Psoas muscle (tissue), 8 donors: ENCODE measurements at regions of chr12 and their contacts with region 1.

Region 1: DNA sequence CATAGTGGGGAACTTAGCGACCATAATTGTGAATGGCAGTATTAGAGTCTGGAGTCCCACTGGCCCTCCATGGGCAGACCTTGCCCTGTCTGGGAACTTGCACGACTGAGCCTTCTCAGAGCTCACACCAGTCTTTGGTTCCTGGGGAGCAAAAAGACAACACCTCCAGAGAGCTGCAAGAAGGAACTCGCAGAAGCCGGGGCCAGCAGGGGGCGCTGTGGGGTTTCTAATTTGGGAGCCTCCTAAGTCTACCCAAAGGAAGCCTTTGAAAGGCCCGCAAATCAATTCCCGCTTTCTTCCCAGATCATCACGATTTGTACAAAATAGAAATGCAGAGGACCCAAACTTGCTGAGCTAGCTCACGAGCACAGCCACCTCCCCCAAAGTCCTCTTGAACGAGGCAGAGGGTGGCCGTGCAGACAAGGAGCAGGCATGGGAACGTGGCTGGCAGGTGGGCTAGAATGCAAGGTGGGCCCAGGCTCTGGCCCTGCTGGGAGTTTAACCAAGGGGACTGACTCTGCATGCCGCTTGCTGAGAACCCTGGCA is 46.3 kb upstream of the FBXO21 start:
- DNase-seq: peak; percentile 76 to 88
- ATAC-seq: peak; percentile 52 to 78 (median 62)
- H3K4me3 ChIP-seq: no peak overlapping the region
- H3K27ac ChIP-seq: no peak overlapping the region
- H3K4me1 ChIP-seq: no peaks in the 10 kb centered on the region
- H3K27me3 ChIP-seq: no peaks in the 10 kb centered on the region
- CTCF ChIP-seq: peak; percentile 79

Region 2: DNA sequence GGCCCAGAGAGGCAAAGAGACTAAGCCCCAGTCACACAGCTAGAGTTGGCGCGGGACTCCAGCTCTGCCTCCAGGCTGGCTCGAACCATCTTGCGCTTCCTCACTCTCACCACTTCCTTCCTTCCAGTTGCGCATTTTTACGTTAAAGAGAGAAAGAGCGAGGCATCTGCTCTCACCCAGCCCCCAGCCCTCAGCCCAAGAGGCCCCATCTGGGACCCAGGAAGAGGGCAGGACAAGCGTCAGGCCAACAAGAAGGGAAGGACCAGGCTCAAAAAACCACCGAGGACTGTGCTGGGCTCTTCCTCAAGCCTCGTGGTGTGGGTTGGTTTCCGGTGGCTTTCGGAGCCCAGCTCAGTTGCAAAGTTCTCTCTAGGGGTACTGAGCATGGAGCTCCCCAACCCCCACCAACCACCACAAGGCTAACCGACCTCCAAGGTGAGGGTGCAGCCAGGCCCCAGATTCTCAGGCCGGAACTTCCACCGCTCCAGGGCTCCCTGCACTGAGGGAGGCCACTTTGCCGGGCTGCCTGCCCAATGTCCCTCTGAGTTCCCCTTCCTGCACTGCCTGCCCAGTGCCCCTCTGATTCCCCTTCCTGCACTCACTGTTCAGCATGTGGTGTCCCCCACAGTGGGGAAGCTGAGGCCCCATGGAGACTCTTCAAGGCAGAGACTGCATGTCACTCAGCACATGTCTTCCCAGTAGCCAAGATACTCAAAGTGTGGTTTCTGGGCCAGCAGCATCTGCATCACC is 173.2 kb before region 1 on chr12:
- intact Hi-C with region 1: no loop called
- DNase-seq: no peak
- ATAC-seq: peak in 3 of 4 donors; percentile 16 to 30 (median 29)
- H3K4me3 ChIP-seq: no peak overlapping the region
- H3K27ac ChIP-seq: no peak overlapping the region
- H3K4me1 ChIP-seq: no peaks in the 10 kb centered on the region
- H3K27me3 ChIP-seq: peaks cover 0 to 6% (median 3%) of the 10 kb centered on the region in 3 donors
- CTCF ChIP-seq: no peak

Region 3: DNA sequence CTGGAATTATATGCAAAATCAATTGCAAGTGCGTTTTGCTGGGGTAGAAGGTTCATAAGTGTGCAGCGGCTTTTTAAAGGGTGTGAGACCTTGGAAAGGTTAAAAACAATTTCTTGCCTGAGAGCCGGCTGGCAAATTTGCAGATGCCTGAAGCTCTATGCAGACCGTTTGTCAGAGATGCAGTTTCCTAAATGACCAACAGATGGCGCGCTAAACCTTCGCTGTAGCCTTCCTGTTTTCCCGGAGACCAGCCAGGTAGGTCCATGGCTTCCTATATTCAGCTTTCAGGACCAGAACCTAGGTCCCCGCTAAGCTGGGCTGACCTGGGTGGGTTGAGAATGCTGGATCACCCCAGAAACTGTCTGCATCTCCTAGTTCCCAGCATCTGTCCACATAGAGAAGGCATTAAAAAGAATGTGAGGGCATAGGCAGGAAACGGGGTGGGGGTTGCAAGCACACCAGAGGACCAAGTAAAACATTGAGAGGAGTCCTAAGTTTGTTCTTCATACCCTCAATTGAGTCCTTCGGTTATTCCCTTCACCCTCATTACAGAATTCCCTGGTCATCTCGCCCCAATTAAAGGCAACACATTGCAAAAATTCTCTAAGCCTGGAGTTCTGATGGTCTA is 130.6 kb after region 1 on chr12:
- intact Hi-C with region 1: loop called in 1 of 2 experiments (anchors 5 kb)
- DNase-seq: peak; percentile 54 to 72
- ATAC-seq: peak; percentile 79 to 87 (median 83)
- H3K4me3 ChIP-seq: no peak overlapping the region
- H3K27ac ChIP-seq: no peak overlapping the region
- H3K4me1 ChIP-seq: no peaks in the 10 kb centered on the region
- H3K27me3 ChIP-seq: peaks cover 0 to 4% (median 0%) of the 10 kb centered on the region in 3 donors
- CTCF ChIP-seq: peak; percentile 90

Region 4: DNA sequence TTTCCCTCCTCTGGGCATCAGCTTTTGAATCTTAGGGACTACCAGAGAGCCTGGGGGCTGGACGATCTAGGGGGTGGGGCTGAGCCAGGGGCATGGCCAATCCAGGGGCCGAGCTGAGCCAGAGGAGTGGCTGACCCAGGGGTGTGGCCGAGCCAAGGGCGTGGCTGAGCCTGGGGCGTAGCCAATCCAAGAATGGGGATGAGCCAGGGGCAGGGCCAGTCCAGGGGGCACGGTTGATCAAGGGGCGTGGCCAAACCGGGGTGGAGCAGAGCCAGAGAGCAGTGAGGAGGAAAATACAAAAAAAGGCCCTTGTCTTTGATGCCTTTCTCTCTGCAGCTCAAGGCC is 344.2 kb after region 1 on chr12:
- intact Hi-C with region 1: loop called (anchors 5 kb)
- DNase-seq: peak; percentile 61 to 85
- ATAC-seq: peak; percentile 91 to 96 (median 93)
- H3K4me3 ChIP-seq: no peak overlapping the region
- H3K27ac ChIP-seq: no peak overlapping the region
- H3K4me1 ChIP-seq: no peaks in the 10 kb centered on the region
- H3K27me3 ChIP-seq: no peaks in the 10 kb centered on the region
- CTCF ChIP-seq: no peak

Region 5: GRCh38 chr12:117671734-117672133 is 435.2 kb after region 1 on chr12:
- intact Hi-C with region 1: loop called in 1 of 2 experiments (anchors 5 kb)
- DNase-seq: peak in 1 of 2 donors; percentile 23
- ATAC-seq: peak in 2 of 4 donors; percentile 57 to 58
- H3K4me3 ChIP-seq: no peak overlapping the region
- H3K27ac ChIP-seq: no peak overlapping the region
- H3K4me1 ChIP-seq: no peaks in the 10 kb centered on the region
- H3K27me3 ChIP-seq: peaks cover 0 to 19% (median 3%) of the 10 kb centered on the region in 3 donors
- CTCF ChIP-seq: peak; percentile 42